OCI-LY7 (cell line): ENCODE measurements at regions of chr1 and their contacts with region 1.

Region 1: DNA sequence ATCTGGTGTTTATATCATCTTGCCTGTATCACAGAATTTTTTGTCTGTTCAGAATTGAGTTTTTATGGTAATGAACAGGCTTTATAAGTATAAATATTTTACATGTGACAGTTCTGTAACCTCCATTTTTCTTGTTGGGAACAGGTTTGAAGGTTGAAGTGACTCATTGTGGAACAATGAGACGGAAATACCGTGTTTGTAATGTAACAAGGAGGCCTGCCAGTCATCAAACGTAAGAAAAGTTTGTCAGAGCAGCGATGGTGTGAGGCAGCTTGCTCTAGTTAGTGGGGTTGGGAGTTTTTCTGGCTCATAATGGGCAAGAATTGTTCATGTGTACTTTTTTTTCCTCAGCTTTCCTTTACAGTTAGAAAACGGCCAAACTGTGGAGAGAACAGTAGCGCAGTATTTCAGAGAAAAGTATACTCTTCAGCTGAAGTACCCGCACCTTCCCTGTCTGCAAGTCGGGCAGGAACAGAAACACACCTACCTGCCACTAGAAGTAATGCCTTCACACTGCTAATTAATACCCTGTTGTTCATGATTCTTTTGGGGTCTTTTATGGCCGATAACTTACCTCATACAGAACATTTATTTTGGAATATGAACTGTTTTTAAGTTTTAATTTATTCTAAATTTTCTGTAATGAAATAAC is 75.2 kb upstream of the TEKT2 start:
- DNase-seq: no peak
- H3K4me3 ChIP-seq: no peak overlapping the region
- H3K27ac ChIP-seq: no peak overlapping the region
- H3K4me1 ChIP-seq: no peaks in the 10 kb centered on the region
- CTCF ChIP-seq: no peak

Region 2: DNA sequence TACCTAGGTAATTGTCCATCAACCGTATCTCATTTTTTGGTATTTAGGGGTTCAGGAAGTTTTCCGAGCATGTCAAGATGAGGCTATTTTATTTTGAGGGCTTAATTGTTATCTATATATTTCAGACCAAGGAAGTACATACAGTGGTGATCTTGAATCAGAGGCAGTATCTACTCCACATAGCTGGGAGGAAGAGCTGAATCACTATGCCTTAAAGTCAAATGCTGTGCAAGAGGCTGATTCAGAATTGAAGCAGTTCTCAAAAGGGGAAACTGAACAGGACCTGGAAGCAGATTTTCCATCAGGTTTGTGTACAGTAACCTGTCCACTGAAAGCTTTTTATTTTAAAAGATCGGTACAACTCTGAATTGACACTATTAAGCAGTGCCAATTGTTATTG is 609.9 kb before region 1 on chr1:
- CTCF ChIA-PET with region 1: no interaction called
- POLR2A ChIA-PET with region 1: no interaction called
- intact Hi-C with region 1: loop called (anchors 5 kb)
- DNase-seq: no peak
- H3K4me3 ChIP-seq: no peak overlapping the region
- H3K27ac ChIP-seq: no peak overlapping the region
- H3K4me1 ChIP-seq: no peaks in the 10 kb centered on the region
- CTCF ChIP-seq: no peak

Region 3: DNA sequence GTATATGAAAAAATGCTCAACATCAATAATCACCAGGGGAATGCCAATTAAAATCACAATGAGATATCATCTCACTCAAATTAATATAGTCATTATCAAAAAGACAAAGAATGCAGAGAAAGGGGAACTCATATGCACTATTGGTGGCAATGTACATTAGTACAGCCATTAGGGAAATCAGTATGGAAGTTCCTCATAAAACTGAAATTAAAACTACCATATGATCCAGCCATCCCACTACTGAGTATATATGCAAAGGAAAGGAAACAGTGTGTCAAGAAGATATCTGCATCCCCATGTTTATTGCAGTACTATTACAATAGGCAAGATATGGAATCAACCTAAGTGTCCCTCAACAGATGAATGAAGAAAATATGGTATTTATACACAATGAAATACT is 43.1 kb after region 1 on chr1:
- CTCF ChIA-PET with region 1: no interaction called
- POLR2A ChIA-PET with region 1: no interaction called
- intact Hi-C with region 1: no loop called
- DNase-seq: no peak
- H3K4me3 ChIP-seq: no peak overlapping the region
- H3K27ac ChIP-seq: no peak overlapping the region
- H3K4me1 ChIP-seq: no peaks in the 10 kb centered on the region
- CTCF ChIP-seq: no peak